ENCODE measurements at regions of chr14 and their contacts with region 1.

Region 1: DNA sequence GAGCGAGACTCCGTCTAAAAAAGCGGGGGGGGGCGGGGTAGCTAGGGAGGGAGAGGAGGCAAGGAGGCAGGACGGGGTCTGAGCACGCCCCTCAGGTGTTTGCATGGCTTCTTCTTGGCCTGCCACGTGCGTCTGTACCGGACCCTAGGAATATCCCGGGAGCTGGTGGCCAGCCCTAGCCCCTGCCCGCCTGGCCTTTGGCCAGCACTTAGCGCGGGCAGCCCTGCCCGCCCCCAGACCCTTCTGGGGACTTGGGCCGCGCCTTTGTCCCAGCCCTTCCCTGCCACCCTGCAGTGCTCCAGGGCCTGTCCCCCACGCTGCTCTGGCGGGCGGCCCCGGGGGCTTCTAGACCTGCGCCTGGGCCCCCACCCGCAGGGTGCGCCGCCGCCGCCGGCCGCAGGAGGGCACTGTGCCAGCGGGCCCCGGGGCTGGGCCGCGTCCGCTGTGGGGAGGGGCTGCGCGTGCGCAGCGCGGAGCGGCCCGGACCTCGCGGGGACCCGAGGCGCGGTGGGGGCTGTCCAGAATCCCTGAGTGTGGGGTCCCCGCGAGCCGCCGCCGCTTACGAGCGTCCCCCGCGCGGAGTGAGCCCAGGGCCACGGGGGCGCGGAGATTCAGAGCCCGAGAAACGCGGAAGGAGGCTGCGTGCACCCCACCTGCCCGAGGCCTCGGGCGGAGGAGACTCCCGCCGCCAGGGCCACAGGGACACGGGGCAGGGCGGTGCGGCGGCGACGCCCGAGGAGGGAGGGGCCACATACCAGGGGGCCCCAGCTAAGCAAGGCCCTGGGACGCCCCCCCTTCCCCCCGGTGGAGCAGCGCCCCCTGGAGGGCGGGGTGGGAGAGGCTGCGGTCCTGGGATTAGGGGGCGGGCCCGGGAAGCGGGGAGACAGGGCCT is 21.0 kb downstream of the SLC25A29 start:
- DNase-seq: peak; percentile 75 to 85 (median 79)
- H3K4me3 ChIP-seq: peak overlapping the region; percentile 69
- H3K4me3 Mint-ChIP-seq: peak overlapping the region in 5 of 7 donors; percentile 73 to 83 (median 82)
- H3K27ac ChIP-seq: peak overlapping the region; percentile 75
- H3K27ac Mint-ChIP-seq: peak overlapping the region in 1 of 8 donors; percentile 68
- H3K4me1 ChIP-seq: peaks cover 11% of the 10 kb centered on the region
- H3K4me1 Mint-ChIP-seq: peaks cover 14 to 30% (median 15%) of the 10 kb centered on the region in 3 donors
- H3K27me3 ChIP-seq: no peaks in the 10 kb centered on the region
- H3K27me3 Mint-ChIP-seq: no peaks in the 10 kb centered on the region

Region 2: GRCh38 chr14:99729991-99730868 is 555.0 kb before region 1 on chr14:
- CTCF ChIA-PET with region 1: no interaction called
- POLR2A ChIA-PET with region 1: no interaction called
- DNase-seq: peak; percentile 33 to 63 (median 55)
- H3K4me3 ChIP-seq: no peak overlapping the region
- H3K4me3 Mint-ChIP-seq: peak overlapping the region in 4 of 7 donors; percentile 40 to 62 (median 54)
- H3K27ac ChIP-seq: no peak overlapping the region
- H3K27ac Mint-ChIP-seq: no peak overlapping the region
- H3K4me1 ChIP-seq: no peaks in the 10 kb centered on the region
- H3K4me1 Mint-ChIP-seq: peaks cover 0 to 3% (median 2%) of the 10 kb centered on the region in 3 donors
- H3K27me3 ChIP-seq: no peaks in the 10 kb centered on the region
- H3K27me3 Mint-ChIP-seq: peaks cover 19 to 46% of the 10 kb centered on the region in 2 donors

Region 3: GRCh38 chr14:100093319-100093718 is 191.9 kb before region 1 on chr14:
- CTCF ChIA-PET with region 1: no interaction called
- POLR2A ChIA-PET with region 1: no interaction called
- DNase-seq: peak in 1 of 5 donors; percentile 64
- H3K4me3 ChIP-seq: no peak overlapping the region
- H3K4me3 Mint-ChIP-seq: peak overlapping the region in 2 of 7 donors; percentile 29 to 58
- H3K27ac ChIP-seq: no peak overlapping the region
- H3K27ac Mint-ChIP-seq: peak overlapping the region; percentile 41 to 95 (median 74)
- H3K4me1 ChIP-seq: peaks cover 98% of the 10 kb centered on the region
- H3K4me1 Mint-ChIP-seq: peaks cover 87 to 100% (median 100%) of the 10 kb centered on the region in 3 donors
- H3K27me3 ChIP-seq: no peaks in the 10 kb centered on the region
- H3K27me3 Mint-ChIP-seq: no peaks in the 10 kb centered on the region

Region 4: DNA sequence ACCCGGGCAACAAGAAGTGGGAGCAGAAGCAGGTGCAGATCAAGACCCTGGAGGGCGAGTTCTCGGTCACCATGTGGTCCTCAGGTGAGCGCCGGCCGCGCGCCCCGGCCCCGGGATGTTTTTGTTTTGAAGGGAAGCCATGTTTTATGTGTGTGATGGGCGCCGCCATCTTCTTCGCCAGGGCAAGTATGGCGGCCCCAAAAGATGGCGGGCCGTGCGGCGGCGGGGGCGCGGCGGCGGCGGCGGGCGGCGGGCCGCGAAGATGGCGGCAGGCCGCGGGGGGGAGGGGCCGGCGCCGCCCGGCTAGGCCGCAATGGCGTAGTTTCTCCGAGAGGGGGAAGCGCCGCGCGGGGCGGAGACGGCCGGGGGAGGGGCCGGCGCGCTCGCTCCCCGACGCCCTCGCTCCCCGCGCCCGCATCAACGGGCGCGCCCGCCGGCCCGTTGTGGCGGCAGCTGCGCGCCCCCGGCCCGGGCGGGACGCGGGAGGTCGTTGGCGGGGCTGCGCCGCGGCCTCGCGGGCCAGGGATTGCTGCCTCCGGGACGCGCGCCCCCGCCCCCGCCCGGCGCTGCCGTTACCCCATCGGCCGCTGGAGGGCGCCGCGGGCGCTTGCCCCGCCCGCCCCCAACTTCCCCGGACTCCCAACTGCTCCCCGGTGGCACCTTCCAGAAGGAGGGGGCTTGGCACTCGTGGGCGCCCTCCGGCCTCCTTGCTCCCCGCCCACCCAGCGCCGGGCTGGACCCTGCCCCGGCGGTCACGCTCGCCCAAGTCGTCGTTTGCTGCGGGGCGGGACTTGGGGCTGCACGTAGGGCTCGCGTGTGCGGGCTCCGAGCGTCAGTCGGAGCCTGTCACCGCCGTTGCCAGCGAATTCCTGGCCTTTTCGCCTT is 45.2 kb before region 1 on chr14:
- CTCF ChIA-PET with region 1: interaction called, 23 read pairs
- POLR2A ChIA-PET with region 1: no interaction called
- DNase-seq: peak; percentile 81 to 90 (median 84)
- H3K4me3 ChIP-seq: peak overlapping the region; percentile 72
- H3K4me3 Mint-ChIP-seq: peak overlapping the region; percentile 90 to 100 (median 93)
- H3K27ac ChIP-seq: peak overlapping the region; percentile 62
- H3K27ac Mint-ChIP-seq: peak overlapping the region; percentile 92 to 100 (median 96)
- H3K4me1 ChIP-seq: peaks cover 63% of the 10 kb centered on the region
- H3K4me1 Mint-ChIP-seq: peaks cover 49 to 70% (median 67%) of the 10 kb centered on the region in 3 donors
- H3K27me3 ChIP-seq: no peaks in the 10 kb centered on the region
- H3K27me3 Mint-ChIP-seq: peaks cover 0 to 1% of the 10 kb centered on the region in 2 donors

Region 5: DNA sequence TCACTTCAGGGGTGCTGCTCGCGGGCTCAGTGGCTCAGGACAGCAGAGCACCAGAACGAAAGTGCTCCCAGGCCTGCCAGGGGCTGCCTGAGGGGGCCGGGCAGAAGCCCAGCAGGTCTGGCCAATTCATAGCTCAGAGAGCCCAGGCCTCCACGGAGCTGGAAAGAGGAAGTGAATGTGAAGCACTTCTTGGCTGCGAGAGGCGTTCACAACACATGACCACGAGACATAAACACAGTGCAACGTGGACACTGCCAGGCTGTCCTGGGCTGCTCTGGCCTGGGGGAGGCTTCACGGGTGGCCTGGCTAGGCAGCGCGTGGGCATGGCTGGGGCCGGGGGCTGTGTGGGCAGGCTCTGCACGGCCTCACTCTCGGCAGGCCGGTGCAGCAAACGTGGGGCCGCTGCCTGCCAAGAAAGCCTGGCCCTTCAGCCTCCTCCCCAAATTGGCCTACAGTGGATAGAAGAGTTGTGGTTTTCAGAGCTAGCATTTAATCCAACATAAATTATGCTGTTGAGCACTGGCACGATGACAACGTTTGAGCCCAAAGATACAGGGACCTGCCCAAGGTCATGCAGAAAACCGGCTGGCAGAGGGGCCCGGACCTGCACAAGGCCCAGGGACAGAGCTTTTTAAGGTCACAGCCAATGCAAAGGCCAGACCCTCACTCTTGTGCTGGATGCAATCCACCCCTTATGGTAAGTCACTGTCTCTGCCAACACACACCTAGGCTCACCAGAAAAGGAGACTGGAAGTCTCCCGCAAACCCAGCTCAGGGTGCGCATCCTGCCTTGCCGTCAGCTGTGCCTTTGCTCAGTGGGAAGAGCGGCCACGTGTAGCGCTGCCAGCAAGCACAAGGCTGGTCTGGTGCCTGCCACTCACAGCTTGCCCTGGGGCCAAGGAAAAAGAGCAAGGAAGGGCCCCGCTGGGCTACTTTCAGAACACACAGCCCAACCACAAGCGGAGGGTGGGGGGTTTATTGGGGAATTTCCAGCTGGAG is 12.3 kb after region 1 on chr14:
- CTCF ChIA-PET with region 1: interaction called, 12 read pairs
- POLR2A ChIA-PET with region 1: no interaction called
- DNase-seq: peak in 1 of 5 donors; percentile 33
- H3K4me3 ChIP-seq: no peak overlapping the region
- H3K4me3 Mint-ChIP-seq: no peak overlapping the region
- H3K27ac ChIP-seq: peak overlapping the region; percentile 24
- H3K27ac Mint-ChIP-seq: peak overlapping the region in 1 of 8 donors; percentile 66
- H3K4me1 ChIP-seq: no peaks in the 10 kb centered on the region
- H3K4me1 Mint-ChIP-seq: peaks cover 0 to 4% (median 3%) of the 10 kb centered on the region in 3 donors
- H3K27me3 ChIP-seq: no peaks in the 10 kb centered on the region
- H3K27me3 Mint-ChIP-seq: no peaks in the 10 kb centered on the region

Region 6: DNA sequence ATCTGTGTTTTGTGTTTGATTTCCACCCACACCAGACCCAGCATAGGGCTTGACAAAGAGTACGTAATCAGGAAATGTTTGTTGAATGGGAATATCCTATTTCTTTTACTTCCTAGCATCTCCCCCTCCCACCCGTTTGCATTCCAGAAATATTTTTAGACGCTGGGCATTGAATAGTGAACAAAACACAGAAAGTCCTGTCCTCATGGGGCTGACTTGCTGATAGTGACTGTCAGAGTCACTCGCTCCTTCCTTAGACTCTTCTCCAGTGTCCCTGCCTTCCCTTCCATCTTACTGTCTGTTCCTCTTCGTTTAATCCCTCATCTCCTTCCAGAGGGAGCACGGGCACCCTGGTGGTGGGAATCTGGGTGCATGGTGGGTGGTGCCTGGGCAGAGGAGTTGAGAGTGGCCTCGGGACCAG is 91.5 kb after region 1 on chr14:
- CTCF ChIA-PET with region 1: interaction called, 10 read pairs
- POLR2A ChIA-PET with region 1: no interaction called
- DNase-seq: no peak
- H3K4me3 ChIP-seq: peak overlapping the region; percentile 67
- H3K4me3 Mint-ChIP-seq: peak overlapping the region; percentile 88 to 98 (median 95)
- H3K27ac ChIP-seq: peak overlapping the region; percentile 84
- H3K27ac Mint-ChIP-seq: peak overlapping the region; percentile 82 to 98 (median 95)
- H3K4me1 ChIP-seq: peaks cover 22% of the 10 kb centered on the region
- H3K4me1 Mint-ChIP-seq: peaks cover 24 to 39% (median 37%) of the 10 kb centered on the region in 3 donors
- H3K27me3 ChIP-seq: no peaks in the 10 kb centered on the region
- H3K27me3 Mint-ChIP-seq: no peaks in the 10 kb centered on the region